A549 (cell line): ENCODE measurements at regions of chr3 and their contacts with region 1.

Region 1: DNA sequence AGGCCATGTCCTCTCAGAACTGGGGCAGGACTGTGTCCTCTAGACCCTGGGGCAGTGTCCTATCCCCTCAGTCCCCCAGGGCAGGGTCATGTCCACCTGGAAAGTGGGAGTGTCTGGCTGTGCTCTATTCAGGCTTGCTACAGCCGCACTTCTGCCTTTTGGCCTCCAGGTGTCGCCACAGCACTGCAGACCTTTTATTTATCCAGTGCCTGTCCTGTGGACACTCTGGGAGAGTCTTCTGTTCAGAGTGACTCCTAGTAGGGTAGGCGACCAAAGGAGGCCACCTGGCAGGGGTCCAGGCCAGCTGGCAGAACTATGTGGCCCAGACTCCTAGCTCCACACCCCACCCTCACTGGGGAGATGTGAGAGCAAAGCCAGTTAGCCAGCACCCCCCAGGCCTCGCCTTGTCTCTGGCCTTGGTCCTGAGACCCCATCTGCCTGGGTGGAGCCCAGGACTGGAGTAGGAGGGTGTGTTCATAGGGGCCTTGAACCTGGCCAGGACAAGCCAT is 3.9 kb downstream of the TMIE start:
- DNase-seq: peak; percentile 51 to 64
- ATAC-seq: peak; percentile 76 to 94
- H3K4me3 ChIP-seq: no peak overlapping the region
- H3K27ac ChIP-seq: no peak overlapping the region
- H3K4me1 ChIP-seq: no peaks in the 10 kb centered on the region
- CTCF ChIP-seq: peak; percentile 79
- EP300 ChIP-seq: no peak
- POLR2A ChIP-seq: no peak
- RAD21 ChIP-seq: peak; percentile 88 to 90

Region 2: GRCh38 chr3:46717447-46718231 is 12.6 kb after region 1 on chr3 and contains the start of gene PRSS50:
- CTCF ChIA-PET with region 1: interaction called, 12 read pairs
- POLR2A ChIA-PET with region 1: no interaction called
- DNase-seq: no peak
- ATAC-seq: peak in 1 of 2 experiments; percentile 76; a peak in 3 of 6 replicates
- H3K4me3 ChIP-seq: no peak within 1 kb of the TSS
- H3K27ac ChIP-seq: no peak within 1 kb of the TSS
- H3K4me1 ChIP-seq: no peaks in the 10 kb centered on the region; the same call in 2 of the 3 replicates
- CTCF ChIP-seq: peak; percentile 13; the same call in 2 of the 3 replicates
- EP300 ChIP-seq: no peak
- POLR2A ChIP-seq: no peak
- RAD21 ChIP-seq: no peak
- polyA plus RNA-seq, gene PRSS50: not detected in 2 replicates

Region 3: GRCh38 chr3:46768061-46768460 is 63.0 kb after region 1 on chr3:
- CTCF ChIA-PET with region 1: no interaction called
- POLR2A ChIA-PET with region 1: no interaction called
- DNase-seq: no peak
- ATAC-seq: no peak
- H3K4me3 ChIP-seq: no peak overlapping the region
- H3K27ac ChIP-seq: no peak overlapping the region
- H3K4me1 ChIP-seq: no peaks in the 10 kb centered on the region
- CTCF ChIP-seq: no peak
- EP300 ChIP-seq: no peak
- POLR2A ChIP-seq: no peak
- RAD21 ChIP-seq: no peak

Region 4: DNA sequence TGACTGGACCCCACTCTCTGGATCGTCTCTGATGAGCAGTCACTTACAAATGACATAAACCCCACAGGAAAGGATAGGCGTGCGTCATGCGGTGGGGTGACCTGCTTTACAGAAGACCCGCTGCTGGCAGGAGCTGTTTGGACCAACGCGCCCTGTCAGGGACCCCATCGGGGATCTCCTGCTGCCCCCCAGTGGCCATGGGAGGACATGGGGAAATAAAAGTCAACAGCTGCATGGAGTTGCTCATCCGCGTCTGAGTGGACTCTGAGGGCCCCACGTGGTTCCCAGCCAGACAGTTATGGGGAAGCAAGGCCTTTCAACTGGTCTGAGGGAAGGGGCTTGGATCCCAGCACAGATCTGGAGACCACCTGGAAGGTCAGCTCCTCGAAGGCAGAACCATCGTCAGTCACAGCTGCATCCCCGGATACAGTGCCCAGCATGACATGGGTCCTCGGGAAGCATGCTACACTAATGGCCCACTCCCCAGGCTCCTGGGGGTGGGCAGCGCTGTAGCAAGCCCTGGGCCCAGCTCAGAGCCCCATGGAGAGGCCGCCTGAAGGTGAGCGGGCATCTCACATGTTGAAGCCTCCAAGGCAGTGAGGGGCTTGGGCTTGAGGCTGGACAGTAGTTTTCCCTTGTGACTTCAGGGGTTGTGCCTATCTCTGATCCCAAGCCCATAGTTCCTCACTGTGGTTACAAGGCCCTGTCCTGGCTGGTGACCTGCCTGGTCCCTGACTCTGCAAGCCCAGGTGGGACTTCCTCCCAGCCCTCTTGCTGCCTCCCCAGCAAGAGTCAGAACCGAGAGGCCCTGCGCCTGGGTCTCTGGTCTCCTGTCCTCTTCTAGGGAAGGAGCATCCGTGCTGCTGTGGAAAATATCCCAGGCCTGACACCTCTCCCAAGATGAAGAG is 204.7 kb after region 1 on chr3:
- CTCF ChIA-PET with region 1: interaction called, 10 read pairs
- POLR2A ChIA-PET with region 1: no interaction called
- DNase-seq: peak; percentile 70 to 88
- ATAC-seq: peak; percentile 73 to 88
- H3K4me3 ChIP-seq: no peak overlapping the region
- H3K27ac ChIP-seq: peak overlapping the region; percentile 53 to 76; a peak in 5 of 6 replicates
- H3K4me1 ChIP-seq: peaks cover 17% of the 10 kb centered on the region
- CTCF ChIP-seq: peak; percentile 72
- EP300 ChIP-seq: no peak
- POLR2A ChIP-seq: no peak
- RAD21 ChIP-seq: peak; percentile 72 to 79